Activated CD8-positive, alpha-beta memory T cell treated with anti-CD3 and anti-CD28 coated beads, Interleukin-2, amount 10 ng/mL, durations not matched to agents 7 days and 5 days (primary cell): ENCODE measurements at regions of chr6 and their contacts with region 1.

Region 1: DNA sequence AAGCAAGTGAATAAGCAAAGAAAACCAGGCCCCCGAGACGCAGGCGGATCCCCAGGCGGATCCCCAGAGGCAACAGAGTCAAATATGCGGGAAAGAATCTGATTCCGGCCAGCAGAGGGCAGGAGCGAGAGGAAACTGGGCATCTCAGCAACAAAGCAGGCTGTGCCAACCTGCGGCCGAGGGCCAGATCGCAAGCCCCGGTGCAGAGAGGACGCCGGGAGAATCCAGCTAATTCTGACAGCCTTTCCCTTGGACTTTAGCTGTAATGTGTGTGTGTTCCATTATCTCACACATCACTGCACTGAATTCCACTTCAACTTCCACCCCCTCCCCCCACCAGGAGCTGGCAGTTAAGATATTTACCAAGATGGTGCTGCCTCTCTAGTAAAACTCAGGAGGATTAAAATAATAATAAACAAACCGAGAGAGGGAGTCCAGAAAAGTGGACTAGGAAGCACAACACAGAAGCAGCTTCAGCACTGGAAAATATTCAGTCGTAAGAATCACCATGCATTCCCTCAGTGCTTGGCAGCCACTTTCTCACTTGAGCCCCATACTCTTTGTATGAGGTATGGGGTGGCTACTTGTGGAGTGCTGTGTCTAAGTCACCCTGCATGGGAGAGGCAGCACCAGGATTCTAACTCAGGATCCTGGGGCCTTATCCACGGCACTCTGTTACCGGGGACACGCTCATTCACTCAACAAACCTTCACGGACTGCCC is 66.2 kb upstream of the SNX9 start:
- DNase-seq: peak; percentile 85
- ATAC-seq: peak; percentile 44
- H3K4me3 Mint-ChIP-seq: no peak overlapping the region
- H3K27ac Mint-ChIP-seq: no peak overlapping the region
- H3K4me1 Mint-ChIP-seq: peaks cover 47% of the 10 kb centered on the region
- H3K27me3 Mint-ChIP-seq: peaks cover 52% of the 10 kb centered on the region

Region 2: GRCh38 chr6:157246048-157246630 is 510.7 kb before region 1 on chr6:
- CTCF ChIA-PET with region 1: no interaction called
- DNase-seq: no peak
- ATAC-seq: no peak
- H3K4me3 Mint-ChIP-seq: no peak overlapping the region
- H3K27ac Mint-ChIP-seq: no peak overlapping the region
- H3K4me1 Mint-ChIP-seq: peaks cover 7% of the 10 kb centered on the region
- H3K27me3 Mint-ChIP-seq: peaks cover 45% of the 10 kb centered on the region

Region 3: DNA sequence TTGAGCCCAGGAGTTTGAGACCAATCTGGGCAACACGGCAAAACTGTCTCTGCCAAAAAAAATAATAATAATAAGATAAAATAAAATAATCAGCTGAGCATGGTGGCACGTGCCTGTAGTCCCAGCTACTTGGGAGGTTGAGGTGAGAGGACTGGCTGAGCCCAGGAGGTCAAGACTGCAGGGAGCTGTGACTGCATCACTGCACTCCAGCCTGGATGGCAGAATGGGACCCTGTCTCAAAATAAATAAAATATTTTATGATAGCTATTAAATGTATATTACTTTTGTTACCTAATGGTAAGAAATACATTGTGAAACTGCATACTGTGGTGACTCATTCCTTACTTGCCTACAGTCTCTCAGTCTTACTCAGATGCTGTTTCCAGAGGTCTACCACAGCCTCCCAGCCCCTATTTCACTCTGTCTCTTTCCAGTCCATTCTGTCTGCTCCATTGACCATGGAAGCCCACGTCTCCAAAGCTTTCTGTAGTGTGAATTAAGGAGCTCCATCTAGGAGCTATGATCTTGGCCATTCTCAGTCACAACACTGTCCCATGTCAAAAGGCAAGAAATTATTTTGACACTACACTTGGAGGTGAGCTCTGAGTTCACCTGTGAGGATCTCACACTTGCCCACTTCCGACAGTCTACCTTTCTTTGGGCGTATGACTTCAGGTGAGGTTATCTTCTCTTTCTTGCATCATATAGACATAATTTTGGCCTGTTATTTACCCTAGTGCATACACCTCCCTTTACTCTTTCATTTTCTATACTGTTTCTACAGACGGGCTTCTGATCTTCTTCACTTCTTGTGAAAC is 43.8 kb after region 1 on chr6:
- CTCF ChIA-PET with region 1: interaction called, 11 read pairs
- DNase-seq: peak; percentile 78
- ATAC-seq: peak; percentile 97
- H3K4me3 Mint-ChIP-seq: peak overlapping the region; percentile 0
- H3K27ac Mint-ChIP-seq: peak overlapping the region; percentile 52
- H3K4me1 Mint-ChIP-seq: peaks cover 23% of the 10 kb centered on the region
- H3K27me3 Mint-ChIP-seq: peaks cover 57% of the 10 kb centered on the region

Region 4: DNA sequence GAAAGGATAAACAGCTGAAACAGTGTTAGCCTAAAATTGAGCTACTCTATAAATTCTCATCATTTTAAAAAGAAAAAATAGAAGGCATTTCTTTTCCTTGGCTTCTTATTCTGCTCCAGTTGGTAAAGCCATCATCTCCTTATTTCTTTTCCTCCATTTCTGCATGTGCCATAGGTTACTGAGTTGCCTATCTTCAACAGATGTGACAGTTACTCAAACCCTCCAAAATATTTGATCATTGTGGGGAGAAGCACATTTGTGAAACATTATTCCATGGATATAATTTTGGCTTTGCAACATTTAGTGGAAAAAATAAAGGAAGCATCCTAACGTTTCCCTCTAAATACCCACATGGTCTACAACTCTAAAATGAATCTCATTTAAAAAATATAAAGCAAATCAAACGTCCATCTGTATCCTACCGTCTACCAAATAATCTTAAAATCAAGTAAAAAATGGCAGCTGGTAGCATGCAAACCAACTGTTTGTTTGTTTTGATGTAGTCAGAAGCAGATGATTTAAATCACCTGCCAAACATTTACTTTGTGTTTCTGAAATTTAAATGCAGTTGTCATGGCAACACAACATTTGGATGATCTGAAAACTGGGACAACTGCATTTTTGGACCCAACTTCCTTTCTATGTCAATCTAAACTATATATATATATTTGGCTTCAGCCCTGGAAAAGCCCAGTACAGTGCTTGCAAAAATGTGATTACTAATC is 49.4 kb after region 1 on chr6:
- CTCF ChIA-PET with region 1: interaction called, 12 read pairs
- DNase-seq: no peak
- ATAC-seq: no peak
- H3K4me3 Mint-ChIP-seq: no peak overlapping the region
- H3K27ac Mint-ChIP-seq: no peak overlapping the region
- H3K4me1 Mint-ChIP-seq: peaks cover 14% of the 10 kb centered on the region
- H3K27me3 Mint-ChIP-seq: peaks cover 55% of the 10 kb centered on the region

Region 5: DNA sequence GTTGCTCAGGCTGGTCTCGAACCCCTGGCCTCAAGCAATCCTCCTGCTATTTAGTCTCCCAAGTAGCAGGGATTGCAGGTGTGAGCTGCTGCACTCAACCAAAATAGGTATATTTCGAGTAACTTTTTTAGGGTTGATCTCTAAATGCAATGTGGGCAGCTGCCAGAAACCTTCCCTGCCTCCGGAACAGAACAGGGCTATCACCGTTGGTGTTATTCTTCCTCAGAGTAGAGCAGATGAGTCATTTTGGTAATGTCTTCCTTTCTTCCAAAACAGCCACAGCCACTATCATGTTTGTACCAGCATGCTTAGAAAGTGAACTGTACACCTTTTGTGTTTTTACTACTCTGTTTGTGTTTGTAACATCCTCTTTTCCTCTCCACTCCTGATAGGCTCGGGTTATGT is 110.3 kb after region 1 on chr6:
- CTCF ChIA-PET with region 1: interaction called, 82 read pairs
- DNase-seq: no peak
- ATAC-seq: peak; percentile 53
- H3K4me3 Mint-ChIP-seq: no peak overlapping the region
- H3K27ac Mint-ChIP-seq: no peak overlapping the region
- H3K4me1 Mint-ChIP-seq: peaks cover 10% of the 10 kb centered on the region
- H3K27me3 Mint-ChIP-seq: peaks cover 8% of the 10 kb centered on the region